ENCODE measurements at regions of chr20 and their contacts with region 1.

Region 1: GRCh38 chr20:53578492-53579222 is 15.0 kb downstream of the ZNF217 start:
- DNase-seq: peak; percentile 59
- H3K4me3 Mint-ChIP-seq: peak overlapping the region; percentile 76
- H3K27ac Mint-ChIP-seq: peak overlapping the region; percentile 95
- H3K4me1 Mint-ChIP-seq: peaks cover 94% of the 10 kb centered on the region
- H3K27me3 Mint-ChIP-seq: no peaks in the 10 kb centered on the region

Region 2: DNA sequence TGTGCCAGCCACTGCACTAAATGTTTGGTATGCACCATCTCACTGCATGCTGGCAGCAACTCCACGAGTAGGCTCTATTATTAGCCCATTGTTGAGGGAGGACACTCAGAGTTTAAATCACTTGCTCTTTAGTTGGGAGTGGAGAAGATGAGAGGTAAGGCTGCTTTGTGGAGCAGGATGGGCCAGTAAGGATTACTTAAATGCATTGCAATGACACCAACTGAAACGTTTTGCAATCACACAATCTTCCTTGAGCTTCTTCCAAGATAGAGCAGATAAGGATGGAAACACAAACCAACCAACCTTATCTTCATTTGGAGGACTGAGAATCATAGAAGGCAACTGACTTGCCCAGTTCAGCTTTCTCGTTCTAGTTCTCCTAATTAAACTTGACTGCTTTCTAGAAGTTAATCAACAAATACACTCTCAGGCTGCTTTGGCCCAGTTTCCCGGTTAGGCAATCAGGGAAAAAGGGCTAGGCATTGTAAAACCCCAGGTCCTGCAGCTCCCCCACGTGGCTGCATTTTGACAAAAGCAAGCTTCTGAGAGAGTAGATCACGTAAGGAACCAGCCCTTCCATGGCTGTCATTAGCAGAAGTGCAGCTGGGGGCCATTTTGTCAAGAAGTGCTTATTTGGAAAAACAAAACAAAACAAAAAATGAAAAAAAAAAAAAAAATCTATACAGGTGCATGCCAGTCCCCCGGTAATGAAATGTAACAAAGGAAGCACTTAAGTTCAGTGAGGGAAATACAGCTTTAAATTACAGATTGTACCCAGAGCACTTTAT is 361.1 kb after region 1 on chr20:
- CTCF ChIA-PET with region 1: interaction called, 11 read pairs
- DNase-seq: peak; percentile 86
- H3K4me3 Mint-ChIP-seq: peak overlapping the region; percentile 6
- H3K27ac Mint-ChIP-seq: peak overlapping the region; percentile 9
- H3K4me1 Mint-ChIP-seq: peaks cover 66% of the 10 kb centered on the region
- H3K27me3 Mint-ChIP-seq: no peaks in the 10 kb centered on the region

Region 3: GRCh38 chr20:54014293-54014926 is 435.8 kb after region 1 on chr20:
- CTCF ChIA-PET with region 1: no interaction called
- DNase-seq: no peak
- H3K4me3 Mint-ChIP-seq: no peak overlapping the region
- H3K27ac Mint-ChIP-seq: no peak overlapping the region
- H3K4me1 Mint-ChIP-seq: peaks cover 12% of the 10 kb centered on the region
- H3K27me3 Mint-ChIP-seq: no peaks in the 10 kb centered on the region